Activated CD8-positive, alpha-beta T cell treated with anti-CD3 and anti-CD28 coated beads for 36 hours (primary cell): ENCODE measurements at regions of chr3 and their contacts with region 1.

Region 1: GRCh38 chr3:178436773-178437172 is 99.5 kb upstream of the KCNMB2 start:
- DNase-seq: no peak
- ATAC-seq: peak; percentile 20
- H3K4me3 Mint-ChIP-seq: no peak overlapping the region
- H3K27ac Mint-ChIP-seq: no peak overlapping the region
- H3K4me1 Mint-ChIP-seq: no peaks in the 10 kb centered on the region
- H3K27me3 Mint-ChIP-seq: peaks cover 2% of the 10 kb centered on the region
- CTCF ChIP-seq: peak; percentile 46

Region 2: GRCh38 chr3:177843093-177843734 is 593.6 kb before region 1 on chr3:
- CTCF ChIA-PET with region 1: no interaction called
- POLR2A ChIA-PET with region 1: no interaction called
- intact Hi-C with region 1: no loop called
- DNase-seq: no peak
- ATAC-seq: no peak
- H3K4me3 Mint-ChIP-seq: no peak overlapping the region
- H3K27ac Mint-ChIP-seq: no peak overlapping the region
- H3K4me1 Mint-ChIP-seq: no peaks in the 10 kb centered on the region
- H3K27me3 Mint-ChIP-seq: no peaks in the 10 kb centered on the region
- CTCF ChIP-seq: no peak

Region 3: DNA sequence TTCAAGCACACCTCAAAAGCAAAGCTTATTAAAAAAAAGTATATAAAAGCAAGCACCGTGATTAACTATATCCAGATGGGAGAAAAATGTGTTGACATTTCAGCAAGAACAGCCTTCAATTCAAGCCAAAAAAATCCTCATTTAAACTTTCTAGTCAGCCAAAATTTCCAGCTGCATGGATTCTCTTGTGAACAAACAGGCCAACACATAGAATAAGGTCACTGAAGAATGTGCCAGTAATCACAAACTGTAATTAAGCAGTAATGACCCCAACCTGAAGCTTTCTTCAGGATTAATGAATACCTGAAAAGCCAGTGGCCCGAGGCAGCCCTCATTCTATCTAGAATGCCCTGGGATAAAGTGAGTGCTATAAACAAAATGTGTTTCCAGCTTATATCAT is 31.2 kb before region 1 on chr3:
- CTCF ChIA-PET with region 1: no interaction called
- POLR2A ChIA-PET with region 1: no interaction called
- intact Hi-C with region 1: no loop called
- DNase-seq: no peak
- ATAC-seq: no peak
- H3K4me3 Mint-ChIP-seq: no peak overlapping the region
- H3K27ac Mint-ChIP-seq: no peak overlapping the region
- H3K4me1 Mint-ChIP-seq: no peaks in the 10 kb centered on the region
- H3K27me3 Mint-ChIP-seq: peaks cover 12% of the 10 kb centered on the region
- CTCF ChIP-seq: no peak

Region 4: DNA sequence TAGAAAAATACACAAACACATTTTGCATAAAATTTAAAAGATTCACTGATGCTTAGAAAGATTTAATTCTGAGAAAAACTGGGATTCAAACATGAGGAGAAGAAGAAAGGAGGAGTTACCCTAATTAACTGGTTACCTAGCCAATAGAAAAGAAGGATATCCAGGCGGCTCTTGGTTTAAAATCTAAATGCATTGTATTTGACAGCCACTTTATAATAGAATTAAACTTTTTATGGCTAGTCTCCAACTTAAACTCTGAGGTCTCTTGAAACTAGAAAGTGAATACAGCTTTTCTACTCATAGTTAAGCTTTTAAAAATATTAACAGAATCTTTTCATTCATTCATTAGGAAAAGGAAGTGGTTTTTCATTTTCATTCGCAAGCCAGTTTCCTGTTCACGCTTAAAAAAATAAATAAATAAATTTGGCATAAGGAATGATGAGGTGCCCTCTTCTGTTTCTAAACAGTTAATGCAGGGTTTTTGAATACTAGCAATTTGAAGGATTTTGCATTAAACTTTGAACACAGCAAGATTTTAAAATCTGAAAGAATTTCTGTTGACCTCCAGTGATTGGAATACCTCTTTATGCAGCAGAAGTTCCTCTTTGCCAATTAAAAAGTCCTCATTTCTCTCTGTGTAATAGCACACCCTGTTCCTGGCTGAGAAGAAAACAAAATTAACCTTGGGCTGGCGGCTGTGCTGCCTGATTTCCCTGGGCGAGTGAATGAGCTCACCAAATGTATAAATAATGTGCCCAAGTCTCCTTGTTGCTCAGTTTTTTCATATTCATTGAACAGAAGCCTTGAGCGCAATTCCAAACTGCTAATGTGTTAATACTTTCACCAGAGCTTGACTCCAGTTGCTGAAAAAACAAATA is 529.8 kb after region 1 on chr3:
- CTCF ChIA-PET with region 1: interaction called, 4 read pairs
- POLR2A ChIA-PET with region 1: no interaction called
- intact Hi-C with region 1: loop called (anchors 5 kb)
- DNase-seq: no peak
- ATAC-seq: no peak
- H3K4me3 Mint-ChIP-seq: no peak overlapping the region
- H3K27ac Mint-ChIP-seq: no peak overlapping the region
- H3K4me1 Mint-ChIP-seq: peaks cover 12% of the 10 kb centered on the region
- H3K27me3 Mint-ChIP-seq: no peaks in the 10 kb centered on the region
- CTCF ChIP-seq: no peak